HCT116 (cell line): ENCODE measurements at regions of chr3 and their contacts with region 1.

Region 1: DNA sequence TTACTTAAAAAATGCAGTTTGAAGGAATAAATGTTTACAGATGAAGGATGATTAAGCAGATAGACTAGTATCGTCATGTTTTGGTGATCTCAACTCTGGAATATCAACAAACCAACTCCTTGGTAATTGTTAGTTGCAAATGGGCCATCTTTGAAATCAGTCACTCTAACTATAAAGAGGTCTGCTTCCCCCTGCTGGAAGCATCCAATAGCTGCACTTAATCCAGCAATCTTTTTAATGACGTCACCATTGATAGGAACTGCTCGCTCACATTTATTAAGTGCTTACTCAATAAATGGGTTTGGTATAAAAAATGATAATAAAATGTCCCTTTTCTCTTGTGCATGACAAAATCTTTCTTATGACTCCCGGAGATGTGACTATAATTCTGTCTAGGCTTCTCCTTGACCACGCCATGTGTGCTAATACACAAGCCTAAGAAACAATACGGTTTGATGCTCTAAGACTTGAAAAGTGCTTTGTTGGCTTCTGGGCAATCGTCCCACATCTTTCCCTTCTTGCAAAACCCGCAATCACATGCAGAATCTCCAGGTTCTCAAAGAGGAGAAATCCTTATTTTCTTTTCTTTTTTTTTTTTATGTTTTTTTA is 227.6 kb upstream of the POU1F1 start:
- DNase-seq: peak; percentile 75
- ATAC-seq: peak; percentile 74
- H3K4me3 ChIP-seq: no peak overlapping the region
- H3K27ac ChIP-seq: no peak overlapping the region
- H3K4me1 ChIP-seq: no peaks in the 10 kb centered on the region
- H3K27me3 ChIP-seq: no peaks in the 10 kb centered on the region
- CTCF ChIP-seq: peak; percentile 68 to 83 (median 77); a peak in 5 of 6 replicates
- POLR2A ChIP-seq: no peak
- RAD21 ChIP-seq: peak; percentile 79

Region 2: GRCh38 chr3:87006844-87007439 is 497.1 kb before region 1 on chr3:
- CTCF ChIA-PET with region 1: no interaction called
- POLR2A ChIA-PET with region 1: no interaction called
- RAD21 ChIA-PET with region 1: no interaction called
- intact Hi-C with region 1: loop called (anchors 5 kb)
- DNase-seq: no peak
- ATAC-seq: no peak
- H3K4me3 ChIP-seq: no peak overlapping the region
- H3K27ac ChIP-seq: no peak overlapping the region
- H3K4me1 ChIP-seq: no peaks in the 10 kb centered on the region
- H3K27me3 ChIP-seq: no peaks in the 10 kb centered on the region
- CTCF ChIP-seq: peak in 2 of 3 experiments; percentile 39 to 44; a peak in 2 of 6 replicates
- POLR2A ChIP-seq: no peak
- RAD21 ChIP-seq: peak; percentile 16; the same call in 1 of the 2 replicates

Region 3: GRCh38 chr3:87260270-87260669 is 243.7 kb before region 1 on chr3:
- CTCF ChIA-PET with region 1: no interaction called
- POLR2A ChIA-PET with region 1: no interaction called
- RAD21 ChIA-PET with region 1: no interaction called
- intact Hi-C with region 1: loop called (anchors 1 kb)
- DNase-seq: peak; percentile 44
- ATAC-seq: peak; percentile 63
- H3K4me3 ChIP-seq: no peak overlapping the region
- H3K27ac ChIP-seq: no peak overlapping the region
- H3K4me1 ChIP-seq: no peaks in the 10 kb centered on the region
- H3K27me3 ChIP-seq: no peaks in the 10 kb centered on the region
- CTCF ChIP-seq: peak; percentile 15 to 72 (median 61); a peak in 4 of 6 replicates
- POLR2A ChIP-seq: no peak
- RAD21 ChIP-seq: peak; percentile 43

Region 4: DNA sequence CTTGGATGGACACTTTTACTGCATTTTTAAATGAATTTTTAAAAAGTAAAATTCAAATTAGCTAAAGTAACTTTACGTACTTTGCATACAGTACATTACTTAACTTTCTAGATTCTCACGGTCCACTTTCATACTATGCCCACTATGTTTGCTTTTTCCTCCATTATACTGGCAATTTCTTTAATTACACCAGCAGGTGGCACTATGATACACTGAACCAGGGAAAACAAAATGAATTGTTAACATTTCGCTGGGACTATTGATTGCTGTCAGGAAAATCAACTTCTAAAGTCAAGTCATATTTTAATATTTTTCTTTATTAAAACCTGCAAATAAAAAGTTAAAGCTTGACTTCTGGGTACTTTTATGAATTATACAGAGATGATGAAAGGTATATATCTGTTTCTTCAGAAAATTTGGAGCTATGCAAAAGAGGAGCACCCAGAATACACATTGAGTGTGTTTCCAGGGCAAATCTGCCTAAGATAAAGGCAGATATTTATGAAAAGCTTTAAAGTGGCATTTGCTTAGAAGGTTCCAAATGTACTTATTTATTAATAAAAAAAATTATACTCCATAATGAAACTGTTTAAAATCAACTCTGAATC is 205.8 kb before region 1 on chr3:
- CTCF ChIA-PET with region 1: interaction called, 16 read pairs
- POLR2A ChIA-PET with region 1: no interaction called
- RAD21 ChIA-PET with region 1: interaction called in 1 of 2 experiments, 3 read pairs
- intact Hi-C with region 1: loop called (anchors 1 kb)
- DNase-seq: peak; percentile 46
- ATAC-seq: peak; percentile 84
- H3K4me3 ChIP-seq: no peak overlapping the region
- H3K27ac ChIP-seq: no peak overlapping the region
- H3K4me1 ChIP-seq: no peaks in the 10 kb centered on the region
- H3K27me3 ChIP-seq: no peaks in the 10 kb centered on the region
- CTCF ChIP-seq: peak; percentile 50 to 72 (median 62); a peak in 5 of 6 replicates
- POLR2A ChIP-seq: no peak
- RAD21 ChIP-seq: peak; percentile 80

Region 5: DNA sequence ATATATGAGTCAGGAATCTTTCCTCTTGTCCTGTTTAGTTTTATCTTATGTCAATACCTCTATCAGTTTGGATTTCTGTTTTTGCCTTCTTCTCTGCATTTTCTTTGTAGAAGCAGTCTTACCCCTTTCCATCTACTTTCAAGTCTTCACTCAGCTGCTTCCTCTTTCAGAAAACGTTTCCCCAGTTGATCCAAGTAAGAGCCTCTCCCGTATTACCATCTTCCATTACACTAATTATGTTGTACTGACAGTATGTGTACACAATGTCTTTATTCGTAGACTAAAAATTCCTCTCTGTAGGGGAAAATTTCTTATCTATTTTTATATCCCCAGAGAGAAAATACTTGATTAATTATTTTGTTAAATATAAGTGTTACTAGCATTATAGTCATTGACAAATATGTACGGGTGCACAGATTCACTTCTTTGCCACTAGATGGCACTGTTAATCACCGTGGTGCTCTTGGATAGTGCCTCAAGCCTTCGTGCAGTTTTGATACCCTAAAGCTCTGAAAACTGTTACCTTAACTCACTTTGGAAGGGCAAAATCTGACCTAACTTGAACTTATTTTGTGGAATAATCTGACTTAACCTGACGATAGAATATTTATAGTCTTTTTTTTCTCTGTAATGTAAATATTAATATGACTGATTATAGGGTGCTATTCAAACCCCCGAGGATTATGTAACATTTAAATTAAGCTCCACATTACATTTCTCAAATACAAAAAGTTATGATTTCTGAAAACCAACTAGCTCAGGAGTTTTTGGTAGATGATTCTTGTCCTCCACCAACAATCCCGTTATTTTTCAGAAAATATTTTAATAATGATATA is 153.4 kb before region 1 on chr3:
- CTCF ChIA-PET with region 1: interaction called, 17 read pairs
- POLR2A ChIA-PET with region 1: no interaction called
- RAD21 ChIA-PET with region 1: interaction called in 1 of 2 experiments, 3 read pairs
- intact Hi-C with region 1: loop called (anchors 1 kb)
- DNase-seq: peak; percentile 38
- ATAC-seq: peak; percentile 99
- H3K4me3 ChIP-seq: no peak overlapping the region
- H3K27ac ChIP-seq: no peak overlapping the region
- H3K4me1 ChIP-seq: no peaks in the 10 kb centered on the region
- H3K27me3 ChIP-seq: no peaks in the 10 kb centered on the region
- CTCF ChIP-seq: peak; percentile 31 to 80 (median 78); a peak in 5 of 6 replicates
- POLR2A ChIP-seq: no peak
- RAD21 ChIP-seq: peak; percentile 62

Region 6: DNA sequence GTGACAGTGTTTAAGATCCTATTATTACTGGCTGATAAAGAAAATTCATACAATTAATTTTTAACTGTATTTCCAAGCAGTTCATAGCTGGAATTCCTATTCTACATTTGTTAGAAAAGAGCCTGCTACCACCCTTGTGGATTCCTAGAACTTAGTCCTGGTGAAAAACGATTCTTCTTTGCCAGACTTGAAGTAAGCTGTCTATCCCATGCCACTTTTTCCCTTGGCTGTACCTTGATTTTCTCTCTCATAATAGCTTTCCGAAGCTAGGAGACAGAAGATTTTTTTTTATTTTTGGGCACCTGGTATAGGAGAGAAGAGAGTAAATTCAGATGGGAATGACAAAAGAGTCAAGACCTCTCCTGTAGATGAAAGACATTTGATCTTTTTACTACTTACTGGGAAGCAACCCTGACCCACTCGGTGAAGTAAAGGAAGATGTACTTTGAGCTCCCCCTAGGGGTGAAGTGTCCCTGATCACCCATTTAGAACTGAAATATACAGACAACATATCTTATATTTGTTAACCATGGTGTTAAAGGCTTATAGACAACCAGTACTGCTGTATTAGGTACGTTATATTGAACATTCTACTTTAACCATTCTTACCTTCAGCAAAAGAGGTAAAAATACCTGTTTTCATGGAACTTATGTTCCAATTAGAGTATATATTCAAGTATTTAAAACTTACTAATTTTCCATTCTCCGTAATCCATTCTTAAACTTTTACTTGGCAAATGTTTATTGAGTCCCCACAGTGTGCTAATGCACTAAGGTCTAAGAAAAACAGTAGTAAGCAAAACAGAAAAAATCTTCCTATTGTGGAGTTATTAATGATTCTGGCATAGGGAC is 609.5 kb after region 1 on chr3:
- CTCF ChIA-PET with region 1: no interaction called
- POLR2A ChIA-PET with region 1: no interaction called
- RAD21 ChIA-PET with region 1: no interaction called
- intact Hi-C with region 1: loop called (anchors 10 kb)
- DNase-seq: peak; percentile 57
- ATAC-seq: peak; percentile 96
- H3K4me3 ChIP-seq: no peak overlapping the region
- H3K27ac ChIP-seq: no peak overlapping the region
- H3K4me1 ChIP-seq: no peaks in the 10 kb centered on the region
- H3K27me3 ChIP-seq: no peaks in the 10 kb centered on the region
- CTCF ChIP-seq: peak; percentile 22 to 83 (median 64); a peak in 4 of 6 replicates
- POLR2A ChIP-seq: no peak
- RAD21 ChIP-seq: peak; percentile 49